Mammary epithelial cell (primary cell): ENCODE measurements at regions of chr2 and their contacts with region 1.

Region 1: DNA sequence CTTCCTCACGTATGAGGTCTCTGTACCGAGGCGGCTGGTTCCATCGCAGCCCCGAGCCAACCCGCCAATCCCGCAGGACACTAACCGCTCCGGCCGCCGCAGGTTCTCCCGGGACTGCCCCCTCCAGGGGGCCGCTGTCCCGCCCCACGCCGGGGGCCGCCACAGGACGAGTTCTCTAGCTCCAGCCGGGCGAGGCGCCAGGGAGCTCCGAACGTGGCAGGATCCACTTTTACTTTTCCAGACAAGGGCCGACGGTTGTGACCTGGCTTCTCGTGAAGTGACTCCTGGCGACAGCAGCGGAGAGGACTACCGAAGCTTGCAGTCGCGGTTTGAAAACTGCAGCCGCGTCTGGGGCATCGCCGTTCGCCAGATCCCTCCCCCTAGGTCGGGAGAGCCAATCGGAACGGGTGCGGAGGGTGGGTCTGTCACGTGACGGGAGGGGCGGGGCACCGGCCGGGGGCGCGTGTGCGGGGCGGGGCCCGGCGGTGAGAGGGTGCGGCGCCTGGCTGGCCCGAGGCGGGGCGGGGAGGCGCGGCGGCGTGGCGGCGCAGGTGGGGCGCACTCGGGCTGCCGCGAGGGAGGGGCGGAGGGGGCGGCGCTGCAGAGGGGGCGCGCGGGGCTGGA is at the start of gene STK17B:
- DNase-seq: peak; percentile 91
- H3K4me3 ChIP-seq: peak within 1 kb of the TSS; percentile 80 to 95 (median 90)
- H3K27ac ChIP-seq: peak within 1 kb of the TSS; percentile 88
- H3K4me1 ChIP-seq: peaks cover 27% of the 10 kb centered on the region
- H3K27me3 ChIP-seq: no peaks in the 10 kb centered on the region
- CTCF ChIP-seq: peak in 1 of 2 donors; percentile 20
- total RNA-seq, gene STK17B: 5.7 to 11.6 TPM

Region 2: DNA sequence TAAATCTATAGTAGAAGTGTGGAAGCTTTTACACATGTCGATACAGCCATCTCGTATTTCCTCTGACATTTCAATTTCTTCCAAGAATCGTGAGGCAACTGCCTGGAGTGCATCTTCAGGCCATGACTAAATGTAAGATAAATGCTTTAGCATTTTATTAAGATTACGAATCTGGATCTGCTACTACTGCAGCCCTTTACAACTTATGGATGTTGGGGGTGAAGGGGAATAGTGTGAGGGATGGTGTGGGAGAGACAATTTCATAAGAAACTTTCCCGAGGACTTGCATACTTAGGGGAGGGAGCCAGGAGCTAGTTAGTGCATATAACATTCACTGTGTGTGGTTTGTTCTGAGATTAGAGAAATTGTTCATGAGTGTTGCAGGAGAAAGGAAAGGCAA is 309.5 kb before region 1 on chr2:
- CTCF ChIA-PET with region 1: no interaction called
- dilution Hi-C with region 1: no loop called
- in situ Hi-C with region 1: no loop called
- intact Hi-C with region 1: no loop called
- DNase-seq: no peak
- H3K4me3 ChIP-seq: no peak overlapping the region
- H3K27ac ChIP-seq: no peak overlapping the region
- H3K4me1 ChIP-seq: no peaks in the 10 kb centered on the region
- H3K27me3 ChIP-seq: no peaks in the 10 kb centered on the region
- CTCF ChIP-seq: no peak

Region 3: DNA sequence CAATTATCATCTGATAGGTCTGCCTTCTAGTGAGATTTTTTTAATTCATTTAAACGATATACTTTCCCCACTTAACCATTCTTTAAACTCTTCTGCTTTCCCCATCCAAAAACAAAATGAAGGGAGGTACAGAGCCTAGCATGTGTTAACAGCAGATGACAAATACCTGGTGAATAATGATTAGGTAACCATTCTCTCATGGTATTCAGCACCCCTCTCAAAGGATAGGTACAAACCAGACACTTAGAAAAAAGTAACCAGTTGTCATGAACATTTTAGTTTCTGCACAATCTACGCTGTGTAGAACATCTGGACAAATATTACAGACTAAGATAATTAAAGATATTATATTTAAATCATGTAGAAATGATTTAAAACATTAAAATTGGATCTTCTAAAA is 159.0 kb before region 1 on chr2:
- CTCF ChIA-PET with region 1: no interaction called
- dilution Hi-C with region 1: no loop called
- in situ Hi-C with region 1: no loop called
- intact Hi-C with region 1: no loop called
- DNase-seq: peak; percentile 1
- H3K4me3 ChIP-seq: no peak overlapping the region
- H3K27ac ChIP-seq: no peak overlapping the region
- H3K4me1 ChIP-seq: no peaks in the 10 kb centered on the region
- H3K27me3 ChIP-seq: no peaks in the 10 kb centered on the region
- CTCF ChIP-seq: no peak

Region 4: DNA sequence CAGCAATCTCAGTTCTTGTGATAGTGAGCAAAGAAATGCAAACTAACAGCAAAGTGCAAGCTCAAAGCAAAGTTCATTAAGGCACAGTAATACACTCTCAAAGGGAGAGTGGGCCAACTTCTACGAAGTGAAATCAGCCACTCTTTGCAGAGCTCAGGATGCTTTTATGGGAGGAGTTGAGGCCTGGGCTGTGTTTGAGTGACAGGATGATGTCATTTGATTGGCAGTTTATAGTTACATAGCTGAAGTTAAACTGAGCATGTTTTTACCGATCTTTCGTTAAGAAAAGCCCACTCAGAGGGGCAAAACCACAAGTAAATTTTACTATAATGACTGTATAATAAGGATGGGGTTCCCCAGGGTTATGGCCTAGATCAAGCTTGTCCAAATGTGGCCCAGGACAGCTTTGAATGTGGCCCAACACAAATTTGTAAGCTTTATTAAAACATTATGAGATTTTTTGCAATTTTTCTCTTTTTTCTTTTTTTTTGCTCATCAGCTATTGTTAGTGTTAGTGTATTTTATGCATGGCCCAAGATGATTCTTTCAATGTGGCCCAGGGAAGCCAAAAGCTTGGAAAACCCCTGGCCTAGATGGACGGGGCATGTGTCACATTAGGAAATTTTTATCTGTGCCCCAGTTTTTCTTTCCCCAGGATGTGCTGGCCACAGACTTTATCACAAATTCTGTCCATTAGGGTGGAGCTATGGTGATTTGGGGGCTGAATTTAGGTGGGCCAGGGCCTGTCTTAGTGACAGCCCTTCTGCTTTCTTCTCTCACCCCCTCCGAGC is 94.4 kb before region 1 on chr2:
- CTCF ChIA-PET with region 1: no interaction called
- dilution Hi-C with region 1: no loop called
- in situ Hi-C with region 1: no loop called
- intact Hi-C with region 1: loop called (anchors 2 kb)
- DNase-seq: no peak
- H3K4me3 ChIP-seq: no peak overlapping the region
- H3K27ac ChIP-seq: no peak overlapping the region
- H3K4me1 ChIP-seq: no peaks in the 10 kb centered on the region
- H3K27me3 ChIP-seq: no peaks in the 10 kb centered on the region
- CTCF ChIP-seq: no peak

Region 5: GRCh38 chr2:196143730-196144131 is 27.6 kb before region 1 on chr2:
- CTCF ChIA-PET with region 1: no interaction called
- dilution Hi-C with region 1: no loop called
- in situ Hi-C with region 1: no loop called
- intact Hi-C with region 1: loop called (anchors 2 kb)
- DNase-seq: no peak
- H3K4me3 ChIP-seq: no peak overlapping the region
- H3K27ac ChIP-seq: no peak overlapping the region
- H3K4me1 ChIP-seq: no peaks in the 10 kb centered on the region
- H3K27me3 ChIP-seq: no peaks in the 10 kb centered on the region
- CTCF ChIP-seq: no peak

Region 6: DNA sequence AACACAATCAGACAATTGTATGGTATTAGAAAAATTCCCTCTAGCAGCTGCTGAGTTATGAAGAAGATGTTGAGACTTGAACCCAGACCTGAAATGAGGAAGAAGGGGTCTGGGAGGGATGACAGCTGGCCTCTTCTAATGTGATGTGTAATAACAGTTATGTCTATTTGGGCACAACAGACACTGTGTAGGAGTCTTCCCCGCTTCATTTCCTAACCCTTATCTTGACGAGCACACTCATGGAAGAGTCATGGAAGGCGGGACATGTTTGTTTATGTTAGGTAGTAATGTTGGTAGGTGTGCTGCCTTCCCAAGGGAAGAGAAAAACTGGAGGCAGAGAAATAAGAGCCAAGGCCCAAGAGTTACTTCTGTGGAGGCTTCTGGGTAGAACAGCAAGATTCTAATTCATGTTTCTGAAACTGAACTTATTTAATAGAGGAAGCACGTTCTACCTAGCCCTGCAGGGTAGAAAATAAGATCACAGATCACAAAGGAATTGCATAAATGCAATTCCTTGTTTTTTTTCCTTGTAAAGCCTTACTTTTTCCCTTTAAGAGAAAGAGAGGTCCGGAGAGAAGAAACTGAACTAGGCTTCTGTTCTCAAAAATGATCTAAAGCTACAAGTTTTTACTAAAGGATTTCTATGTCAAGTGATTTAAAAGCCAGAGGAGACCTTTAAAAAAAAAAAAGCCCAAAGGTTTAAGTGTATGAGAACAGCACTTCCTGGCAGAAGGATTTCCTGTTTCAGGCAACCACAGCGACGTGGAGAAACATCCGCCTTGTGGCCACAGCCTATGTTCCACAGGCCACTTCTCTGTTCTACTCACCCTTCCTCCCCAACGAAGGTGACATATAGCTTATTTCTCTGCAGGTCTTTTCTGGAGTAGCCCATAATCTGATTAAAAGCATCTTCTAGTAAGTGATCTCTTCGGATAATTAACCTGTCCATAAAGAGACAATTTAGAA is 68.5 kb after region 1 on chr2:
- CTCF ChIA-PET with region 1: no interaction called
- dilution Hi-C with region 1: no loop called
- in situ Hi-C with region 1: loop called in 1 of 2 experiments (anchors 5 kb)
- intact Hi-C with region 1: no loop called
- DNase-seq: peak; percentile 92
- H3K4me3 ChIP-seq: no peak overlapping the region
- H3K27ac ChIP-seq: peak overlapping the region; percentile 96
- H3K4me1 ChIP-seq: peaks cover 30% of the 10 kb centered on the region
- H3K27me3 ChIP-seq: no peaks in the 10 kb centered on the region
- CTCF ChIP-seq: peak in 1 of 2 donors; percentile 18

Region 7: DNA sequence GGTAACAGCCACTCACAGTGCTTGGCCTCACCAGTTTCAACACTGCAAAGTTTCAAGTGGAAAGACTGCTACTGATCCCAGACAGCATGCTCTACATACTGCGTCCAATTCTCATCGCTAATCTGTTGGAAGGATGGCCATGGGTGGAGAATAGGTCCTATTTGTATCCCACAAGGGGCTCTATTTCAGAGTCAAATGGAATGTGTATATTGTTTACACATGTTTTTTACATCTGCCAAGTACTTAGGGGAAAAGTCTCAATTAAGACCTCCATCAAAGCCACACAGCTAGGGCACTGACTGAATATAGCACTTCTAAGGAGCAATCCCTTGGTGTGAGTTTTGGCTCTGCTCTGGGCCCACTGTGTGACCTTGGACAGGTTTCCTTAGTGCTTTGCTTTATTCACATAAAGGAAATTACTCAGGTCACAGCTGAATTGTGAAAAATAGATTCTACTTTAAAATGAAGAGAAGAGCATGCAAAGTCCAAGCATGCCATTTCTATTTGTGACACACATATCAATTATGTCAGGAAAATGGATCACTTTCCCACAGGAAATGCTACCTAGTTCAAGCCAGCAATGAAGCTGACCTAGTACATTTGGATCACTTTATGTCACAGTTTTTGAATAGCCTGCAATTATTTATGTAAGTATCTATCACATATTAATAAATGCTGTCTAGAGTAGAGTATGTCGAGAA is 112.9 kb after region 1 on chr2:
- CTCF ChIA-PET with region 1: no interaction called
- dilution Hi-C with region 1: no loop called
- in situ Hi-C with region 1: loop called in 1 of 2 experiments (anchors 5 kb)
- intact Hi-C with region 1: no loop called
- DNase-seq: no peak
- H3K4me3 ChIP-seq: no peak overlapping the region
- H3K27ac ChIP-seq: no peak overlapping the region
- H3K4me1 ChIP-seq: peaks cover 9% of the 10 kb centered on the region
- H3K27me3 ChIP-seq: no peaks in the 10 kb centered on the region
- CTCF ChIP-seq: no peak

Region 8: DNA sequence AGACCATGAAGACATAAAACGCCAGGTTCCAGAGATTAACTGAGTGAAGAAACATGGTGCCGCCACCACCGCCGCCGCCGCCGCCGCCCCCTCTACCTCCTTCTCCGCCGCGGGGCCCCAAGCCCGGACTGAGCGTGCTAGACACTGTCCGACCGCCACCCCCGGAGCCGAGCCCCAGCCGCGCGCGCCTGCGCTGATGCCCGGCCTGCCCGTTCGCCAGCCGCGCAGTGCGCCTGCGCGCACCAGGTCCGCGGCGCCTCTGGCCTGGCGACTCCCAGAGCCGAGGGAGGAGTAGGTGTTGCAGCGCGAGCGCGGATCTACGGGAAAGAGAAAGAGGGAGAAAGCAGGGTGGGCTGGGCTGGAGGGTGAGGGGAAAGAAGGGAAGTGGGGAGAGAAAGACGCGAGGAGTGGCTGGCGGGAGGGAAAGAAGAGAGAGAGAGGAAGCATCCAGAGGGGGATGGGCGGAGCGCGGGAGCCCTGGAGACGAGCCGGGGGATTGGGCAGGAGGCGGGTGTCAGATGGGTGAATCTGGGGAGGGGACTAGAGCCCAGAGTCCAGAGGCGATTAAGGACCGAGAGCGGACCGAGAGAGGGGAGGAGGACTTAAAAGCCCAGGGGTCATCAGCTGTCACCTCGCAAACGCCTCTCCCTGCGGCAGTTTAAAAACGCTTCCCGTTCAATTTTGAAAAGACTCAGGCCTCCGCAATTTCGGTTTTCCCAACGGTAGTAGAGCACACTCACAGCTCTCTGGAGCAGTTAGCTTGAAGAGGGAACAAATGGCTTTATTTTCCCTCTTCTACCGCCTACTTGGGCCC is 755.4 kb after region 1 on chr2 and contains the start of gene PGAP1:
- CTCF ChIA-PET with region 1: no interaction called
- dilution Hi-C with region 1: no loop called
- in situ Hi-C with region 1: no loop called
- intact Hi-C with region 1: loop called (anchors 10 kb)
- DNase-seq: peak; percentile 87
- H3K4me3 ChIP-seq: peak within 1 kb of the TSS; percentile 93 to 97 (median 96)
- H3K27ac ChIP-seq: peak within 1 kb of the TSS; percentile 85
- H3K4me1 ChIP-seq: peaks cover 19% of the 10 kb centered on the region
- H3K27me3 ChIP-seq: no peaks in the 10 kb centered on the region
- CTCF ChIP-seq: no peak
- total RNA-seq, gene PGAP1: 13.7 to 21.3 TPM